ENCODE measurements at regions of chr2 and their contacts with region 1.

Region 1: GRCh38 chr2:158179660-158180059 is 78.0 kb downstream of the UPP2 start:
- DNase-seq: no peak
- ATAC-seq: no peak
- H3K4me3 ChIP-seq: no peak overlapping the region
- H3K4me3 Mint-ChIP-seq: no peak overlapping the region
- H3K27ac ChIP-seq: no peak overlapping the region
- H3K27ac Mint-ChIP-seq: no peak overlapping the region
- H3K4me1 ChIP-seq: no peaks in the 10 kb centered on the region
- H3K4me1 Mint-ChIP-seq: peaks cover 0 to 2% (median 0%) of the 10 kb centered on the region in 7 donors
- H3K27me3 ChIP-seq: peaks cover 0 to 5% of the 10 kb centered on the region in 2 donors
- H3K27me3 Mint-ChIP-seq: peaks cover 39 to 49% (median 47%) of the 10 kb centered on the region in 5 donors

Region 2: GRCh38 chr2:158619496-158619895 is 439.8 kb after region 1 on chr2:
- CTCF ChIA-PET with region 1: no interaction called
- POLR2A ChIA-PET with region 1: no interaction called
- intact Hi-C with region 1: loop called in 1 of 2 experiments (anchors 10 kb)
- DNase-seq: no peak
- ATAC-seq: peak; percentile 32
- H3K4me3 ChIP-seq: no peak overlapping the region
- H3K4me3 Mint-ChIP-seq: no peak overlapping the region
- H3K27ac ChIP-seq: no peak overlapping the region
- H3K27ac Mint-ChIP-seq: no peak overlapping the region
- H3K4me1 ChIP-seq: no peaks in the 10 kb centered on the region
- H3K4me1 Mint-ChIP-seq: peaks cover 0 to 4% (median 0%) of the 10 kb centered on the region in 7 donors
- H3K27me3 ChIP-seq: no peaks in the 10 kb centered on the region
- H3K27me3 Mint-ChIP-seq: no peaks in the 10 kb centered on the region